IMR-90 (cell line): ENCODE measurements at regions of chr4 and their contacts with region 1.

Region 1: DNA sequence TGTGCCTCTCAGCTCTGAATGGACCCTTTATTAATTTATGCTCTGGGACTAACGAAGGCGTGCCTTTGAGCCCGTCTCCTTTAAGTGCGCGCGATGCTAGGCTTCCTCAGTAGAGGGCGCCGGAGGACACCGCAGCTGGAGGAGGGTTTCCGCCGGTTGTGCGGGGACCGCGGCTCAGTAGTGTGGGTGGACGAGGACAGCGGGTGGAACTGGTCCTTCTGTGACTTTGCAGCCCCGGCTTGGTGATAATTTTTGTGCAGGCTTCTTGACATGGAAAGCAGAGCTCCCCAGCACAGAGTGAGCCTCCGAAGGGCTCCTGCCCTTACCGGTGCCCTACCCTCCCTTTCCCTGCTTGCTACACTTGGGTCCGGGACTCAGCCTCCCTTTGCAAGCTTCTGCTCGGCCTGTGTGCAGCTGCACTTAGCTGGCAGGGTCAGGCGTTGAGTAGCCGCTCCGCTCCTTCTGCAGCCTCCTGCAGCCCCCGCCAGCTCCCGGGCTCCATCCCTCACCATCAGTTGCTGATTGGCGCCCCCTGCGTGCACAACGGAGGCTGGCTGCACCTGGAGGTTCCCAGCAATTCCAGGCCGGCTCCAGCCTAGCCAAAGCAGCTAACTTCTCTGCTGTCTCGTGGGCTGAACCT is 26.8 kb upstream of the BOD1L1 start:
- DNase-seq: peak; percentile 68
- ATAC-seq: peak; percentile 97
- H3K4me3 ChIP-seq: peak overlapping the region; percentile 50
- H3K27ac ChIP-seq: peak overlapping the region; percentile 20
- H3K4me1 ChIP-seq: peaks cover 2% of the 10 kb centered on the region; the same call in 1 of the 2 replicates
- H3K27me3 ChIP-seq: no peaks in the 10 kb centered on the region
- CTCF ChIP-seq: peak; percentile 93
- POLR2A ChIP-seq: no peak
- RAD21 ChIP-seq: peak; percentile 81

Region 2: DNA sequence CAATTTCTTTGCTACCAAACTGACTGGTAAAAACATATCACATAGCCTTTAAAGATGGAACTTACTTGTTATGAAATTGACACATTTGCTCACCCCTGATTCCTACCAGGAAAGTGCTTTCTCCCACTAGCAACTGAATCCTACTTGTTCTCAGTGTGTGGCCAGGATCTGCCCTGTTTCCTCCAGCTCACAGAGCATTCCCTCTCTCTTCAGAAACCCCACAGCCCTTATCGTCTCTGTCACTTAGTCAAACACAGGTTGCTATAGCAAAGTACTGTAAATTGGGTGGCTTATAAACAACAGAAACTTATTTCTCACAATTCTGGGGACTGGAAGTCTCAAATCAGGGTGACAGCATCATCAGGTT is 238.4 kb after region 1 on chr4:
- CTCF ChIA-PET with region 1: no interaction called
- POLR2A ChIA-PET with region 1: no interaction called
- dilution Hi-C with region 1: no loop called
- in situ Hi-C with region 1: no loop called
- intact Hi-C with region 1: loop called (anchors 5 kb)
- DNase-seq: peak; percentile 65
- ATAC-seq: peak; percentile 42
- H3K4me3 ChIP-seq: no peak overlapping the region; the same call in 1 of the 2 replicates
- H3K27ac ChIP-seq: peak overlapping the region; percentile 96
- H3K4me1 ChIP-seq: peaks cover 28% of the 10 kb centered on the region
- H3K27me3 ChIP-seq: no peaks in the 10 kb centered on the region
- CTCF ChIP-seq: no peak
- POLR2A ChIP-seq: 0 out of 2 replicates have a peak, but pooled peaks have one; percentile 19
- RAD21 ChIP-seq: no peak

Region 3: GRCh38 chr4:13988353-13989305 is 334.4 kb after region 1 on chr4:
- CTCF ChIA-PET with region 1: no interaction called
- POLR2A ChIA-PET with region 1: no interaction called
- dilution Hi-C with region 1: no loop called
- in situ Hi-C with region 1: no loop called
- intact Hi-C with region 1: loop called (anchors 2 kb)
- DNase-seq: peak; percentile 97
- ATAC-seq: peak; percentile 73
- H3K4me3 ChIP-seq: no peak overlapping the region
- H3K27ac ChIP-seq: peak overlapping the region; percentile 39
- H3K4me1 ChIP-seq: peaks cover 18% of the 10 kb centered on the region
- H3K27me3 ChIP-seq: no peaks in the 10 kb centered on the region
- CTCF ChIP-seq: no peak
- POLR2A ChIP-seq: no peak
- RAD21 ChIP-seq: no peak; the same call in 1 of the 2 replicates

Region 4: GRCh38 chr4:14345356-14345775 is 691.1 kb after region 1 on chr4:
- CTCF ChIA-PET with region 1: no interaction called
- POLR2A ChIA-PET with region 1: no interaction called
- dilution Hi-C with region 1: no loop called
- in situ Hi-C with region 1: no loop called
- intact Hi-C with region 1: loop called (anchors 10 kb)
- DNase-seq: peak; percentile 66
- ATAC-seq: peak; percentile 76
- H3K4me3 ChIP-seq: no peak overlapping the region
- H3K27ac ChIP-seq: no peak overlapping the region
- H3K4me1 ChIP-seq: no peaks in the 10 kb centered on the region
- H3K27me3 ChIP-seq: no peaks in the 10 kb centered on the region
- CTCF ChIP-seq: no peak
- POLR2A ChIP-seq: no peak
- RAD21 ChIP-seq: no peak

Region 5: GRCh38 chr4:14787894-14788293 is 1133.6 kb after region 1 on chr4:
- CTCF ChIA-PET with region 1: no interaction called
- POLR2A ChIA-PET with region 1: no interaction called
- dilution Hi-C with region 1: no loop called
- in situ Hi-C with region 1: no loop called
- intact Hi-C with region 1: loop called (anchors 2 kb)
- DNase-seq: peak; percentile 13
- ATAC-seq: no peak
- H3K4me3 ChIP-seq: no peak overlapping the region
- H3K27ac ChIP-seq: no peak overlapping the region
- H3K4me1 ChIP-seq: no peaks in the 10 kb centered on the region
- H3K27me3 ChIP-seq: no peaks in the 10 kb centered on the region
- CTCF ChIP-seq: peak; percentile 25; the same call in 1 of the 2 replicates
- POLR2A ChIP-seq: no peak
- RAD21 ChIP-seq: peak; percentile 41; the same call in 1 of the 2 replicates

Region 6: GRCh38 chr4:15162465-15163283 is 1508.4 kb after region 1 on chr4:
- CTCF ChIA-PET with region 1: interaction called, 5 read pairs
- POLR2A ChIA-PET with region 1: no interaction called
- dilution Hi-C with region 1: no loop called
- in situ Hi-C with region 1: loop called (anchors 10 kb)
- intact Hi-C with region 1: loop called (anchors 5 kb)
- DNase-seq: peak; percentile 53
- ATAC-seq: peak; percentile 54
- H3K4me3 ChIP-seq: no peak overlapping the region
- H3K27ac ChIP-seq: no peak overlapping the region
- H3K4me1 ChIP-seq: peaks cover 2% of the 10 kb centered on the region; the same call in 1 of the 2 replicates
- H3K27me3 ChIP-seq: peaks cover 3% of the 10 kb centered on the region
- CTCF ChIP-seq: peak; percentile 55
- POLR2A ChIP-seq: no peak
- RAD21 ChIP-seq: peak; percentile 54